CD4-positive, alpha-beta memory T cell (primary cell): ENCODE measurements at regions of chr5 and their contacts with region 1.

Region 1: DNA sequence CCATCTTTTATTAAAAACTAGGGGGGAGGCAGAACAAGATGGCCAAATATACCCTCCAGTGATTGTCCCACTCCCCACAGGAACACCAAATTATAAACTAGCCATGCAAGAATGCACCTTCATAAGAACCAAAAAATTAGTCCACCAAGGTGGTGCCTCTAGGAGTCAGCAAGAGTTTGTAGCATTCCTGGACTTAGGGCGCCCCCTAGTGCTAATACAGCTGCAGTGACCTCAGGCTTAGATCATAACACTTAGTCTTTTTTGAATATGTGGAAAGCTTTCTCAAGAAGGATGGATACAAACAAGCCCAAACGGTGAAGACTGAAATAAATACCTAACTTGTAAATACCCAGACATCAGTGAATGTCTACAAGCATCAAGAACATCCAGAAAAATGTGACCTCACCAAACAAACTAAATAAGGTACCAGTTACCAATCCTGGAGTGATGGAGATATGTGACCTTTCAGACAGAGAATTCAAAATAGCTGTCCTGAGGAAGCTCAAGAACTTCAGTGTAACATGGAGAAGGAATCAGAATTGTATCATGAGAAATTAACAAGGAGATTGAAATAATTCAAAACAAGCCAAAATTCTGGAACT is 19.3 kb downstream of the PPIP5K2 start:
- DNase-seq: peak; percentile 76 to 80 (median 80)
- H3K4me3 ChIP-seq: no peak overlapping the region
- H3K4me3 Mint-ChIP-seq: no peak overlapping the region
- H3K27ac ChIP-seq: no peak overlapping the region
- H3K27ac Mint-ChIP-seq: peak overlapping the region in 2 of 7 donors; percentile 25 to 43
- H3K4me1 ChIP-seq: no peaks in the 10 kb centered on the region
- H3K4me1 Mint-ChIP-seq: peaks cover 2 to 6% (median 4%) of the 10 kb centered on the region in 4 donors
- H3K27me3 ChIP-seq: no peaks in the 10 kb centered on the region
- H3K27me3 Mint-ChIP-seq: no peaks in the 10 kb centered on the region

Region 2: DNA sequence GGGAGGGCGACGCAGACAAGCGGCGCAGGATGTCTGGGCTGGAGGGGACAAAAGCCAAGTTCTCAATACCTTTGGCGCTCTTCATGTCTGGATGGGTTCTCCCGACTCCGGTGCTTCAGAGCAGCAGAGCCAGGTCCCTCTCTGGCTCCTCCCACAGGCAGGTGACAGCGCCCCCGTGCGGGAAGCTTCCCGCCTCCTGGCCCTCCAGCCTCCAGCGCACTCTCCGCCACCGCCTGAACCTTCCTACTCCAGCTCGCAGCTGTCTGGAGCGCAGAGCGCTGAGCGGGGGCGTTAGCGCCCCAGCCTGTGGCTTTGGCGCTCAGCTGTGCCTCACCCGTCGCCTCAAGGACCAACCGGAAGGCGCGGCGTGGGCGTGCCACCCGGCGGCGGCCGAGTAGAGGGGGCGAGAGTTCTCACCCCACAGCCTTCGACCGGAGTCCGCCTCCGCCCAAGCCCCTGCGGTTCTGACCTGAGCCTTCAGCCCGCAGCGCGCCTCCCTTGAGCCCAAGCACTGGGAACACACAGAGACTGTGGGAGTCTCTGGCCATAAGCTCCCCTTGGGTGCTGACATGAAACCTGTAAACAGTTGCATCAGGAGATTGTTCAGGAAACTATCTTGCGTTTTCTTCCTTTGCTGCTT is 843.1 kb before region 1 on chr5 and contains the start of gene SLCO4C1:
- CTCF ChIA-PET with region 1: no interaction called
- POLR2A ChIA-PET with region 1: no interaction called
- intact Hi-C with region 1: loop called (anchors 5 kb)
- DNase-seq: peak; percentile 55 to 73 (median 62)
- H3K4me3 ChIP-seq: peak within 1 kb of the TSS; percentile 54 to 69
- H3K4me3 Mint-ChIP-seq: peak within 1 kb of the TSS; percentile 86 to 91 (median 90)
- H3K27ac ChIP-seq: peak within 1 kb of the TSS; percentile 42
- H3K27ac Mint-ChIP-seq: peak within 1 kb of the TSS; percentile 16 to 90 (median 82)
- H3K4me1 ChIP-seq: peaks cover 18% of the 10 kb centered on the region
- H3K4me1 Mint-ChIP-seq: peaks cover 13 to 26% (median 21%) of the 10 kb centered on the region in 4 donors
- H3K27me3 ChIP-seq: no peaks in the 10 kb centered on the region
- H3K27me3 Mint-ChIP-seq: peaks cover 0 to 2% of the 10 kb centered on the region in 2 donors
- total RNA-seq, gene SLCO4C1: 0.23 to 0.30 TPM

Region 3: GRCh38 chr5:102583276-102584124 is 555.9 kb before region 1 on chr5:
- CTCF ChIA-PET with region 1: interaction called, 12 read pairs
- POLR2A ChIA-PET with region 1: no interaction called
- intact Hi-C with region 1: no loop called
- DNase-seq: peak in 3 of 5 donors; percentile 10 to 16 (median 11)
- H3K4me3 ChIP-seq: no peak overlapping the region
- H3K4me3 Mint-ChIP-seq: no peak overlapping the region
- H3K27ac ChIP-seq: no peak overlapping the region
- H3K27ac Mint-ChIP-seq: no peak overlapping the region
- H3K4me1 ChIP-seq: no peaks in the 10 kb centered on the region
- H3K4me1 Mint-ChIP-seq: peaks cover 0 to 2% (median 0%) of the 10 kb centered on the region in 4 donors
- H3K27me3 ChIP-seq: no peaks in the 10 kb centered on the region
- H3K27me3 Mint-ChIP-seq: peaks cover 0 to 2% of the 10 kb centered on the region in 2 donors

Region 4: GRCh38 chr5:102762562-102763227 is 376.7 kb before region 1 on chr5:
- CTCF ChIA-PET with region 1: no interaction called
- POLR2A ChIA-PET with region 1: no interaction called
- intact Hi-C with region 1: no loop called
- DNase-seq: no peak
- H3K4me3 ChIP-seq: peak overlapping the region in 1 of 2 donors; percentile 3
- H3K4me3 Mint-ChIP-seq: peak overlapping the region; percentile 64 to 86 (median 78)
- H3K27ac ChIP-seq: peak overlapping the region; percentile 47
- H3K27ac Mint-ChIP-seq: peak overlapping the region; percentile 37 to 84 (median 70)
- H3K4me1 ChIP-seq: peaks cover 69% of the 10 kb centered on the region
- H3K4me1 Mint-ChIP-seq: peaks cover 63 to 80% (median 73%) of the 10 kb centered on the region in 4 donors
- H3K27me3 ChIP-seq: no peaks in the 10 kb centered on the region
- H3K27me3 Mint-ChIP-seq: no peaks in the 10 kb centered on the region

Region 5: GRCh38 chr5:102778478-102778877 is 360.9 kb before region 1 on chr5:
- CTCF ChIA-PET with region 1: interaction called, 49 read pairs
- POLR2A ChIA-PET with region 1: interaction called, 3 read pairs
- intact Hi-C with region 1: loop called (anchors 1 kb)
- DNase-seq: no peak
- H3K4me3 ChIP-seq: no peak overlapping the region
- H3K4me3 Mint-ChIP-seq: no peak overlapping the region
- H3K27ac ChIP-seq: no peak overlapping the region
- H3K27ac Mint-ChIP-seq: no peak overlapping the region
- H3K4me1 ChIP-seq: peaks cover 10% of the 10 kb centered on the region
- H3K4me1 Mint-ChIP-seq: peaks cover 17 to 32% (median 23%) of the 10 kb centered on the region in 4 donors
- H3K27me3 ChIP-seq: no peaks in the 10 kb centered on the region
- H3K27me3 Mint-ChIP-seq: no peaks in the 10 kb centered on the region

Region 6: DNA sequence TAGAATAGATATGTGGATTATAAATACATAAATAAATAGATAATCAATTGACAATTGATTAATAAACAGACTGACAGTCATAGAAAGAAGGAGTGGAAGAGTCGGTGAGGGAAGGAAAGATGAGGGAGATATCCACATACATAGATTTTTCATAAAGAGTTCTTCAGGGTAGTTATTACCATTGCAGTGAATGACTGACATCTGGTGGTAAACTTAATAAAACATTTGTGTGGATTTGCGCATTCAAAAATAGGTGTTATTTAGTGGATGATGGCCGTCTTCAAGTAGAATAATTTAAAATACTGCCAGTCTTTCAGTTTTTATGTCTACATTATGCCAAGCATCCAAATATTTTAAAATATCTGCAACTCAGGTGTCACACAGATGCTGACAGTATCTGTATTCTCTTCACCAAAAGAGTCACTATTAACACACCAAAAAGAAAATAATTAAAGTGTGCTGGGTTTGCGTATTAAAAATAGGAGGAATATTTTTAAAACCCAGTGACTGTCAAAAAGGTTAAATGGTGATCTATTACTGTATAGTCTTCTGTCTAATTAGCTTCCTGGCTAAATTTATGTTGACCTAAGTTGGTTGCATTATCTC is 98.2 kb before region 1 on chr5:
- CTCF ChIA-PET with region 1: interaction called, 8 read pairs
- POLR2A ChIA-PET with region 1: no interaction called
- intact Hi-C with region 1: loop called (anchors 5 kb)
- DNase-seq: peak in 1 of 5 donors; percentile 9
- H3K4me3 ChIP-seq: no peak overlapping the region
- H3K4me3 Mint-ChIP-seq: no peak overlapping the region
- H3K27ac ChIP-seq: no peak overlapping the region
- H3K27ac Mint-ChIP-seq: no peak overlapping the region
- H3K4me1 ChIP-seq: no peaks in the 10 kb centered on the region
- H3K4me1 Mint-ChIP-seq: no peaks in the 10 kb centered on the region
- H3K27me3 ChIP-seq: no peaks in the 10 kb centered on the region
- H3K27me3 Mint-ChIP-seq: peaks cover 3 to 4% of the 10 kb centered on the region in 2 donors